ENCODE measurements at regions of chr1 and their contacts with region 1.

Region 1: GRCh38 chr1:229035054-229035747 is 235.7 kb upstream of the RAB4A start:
- DNase-seq: no peak
- H3K4me3 ChIP-seq: no peak overlapping the region
- H3K27ac ChIP-seq: no peak overlapping the region
- H3K4me1 ChIP-seq: no peaks in the 10 kb centered on the region
- H3K27me3 ChIP-seq: peaks cover 28% of the 10 kb centered on the region
- CTCF ChIP-seq: no peak

Region 2: GRCh38 chr1:228804671-228805413 is 230.4 kb before region 1 on chr1:
- CTCF ChIA-PET with region 1: no interaction called
- POLR2A ChIA-PET with region 1: no interaction called
- intact Hi-C with region 1: no loop called
- DNase-seq: no peak
- H3K4me3 ChIP-seq: no peak overlapping the region
- H3K27ac ChIP-seq: no peak overlapping the region
- H3K4me1 ChIP-seq: no peaks in the 10 kb centered on the region
- H3K27me3 ChIP-seq: no peaks in the 10 kb centered on the region
- CTCF ChIP-seq: no peak

Region 3: GRCh38 chr1:229059671-229060539 is 24.7 kb after region 1 on chr1:
- CTCF ChIA-PET with region 1: no interaction called
- POLR2A ChIA-PET with region 1: no interaction called
- intact Hi-C with region 1: loop called (anchors 2 kb)
- DNase-seq: no peak
- H3K4me3 ChIP-seq: no peak overlapping the region
- H3K27ac ChIP-seq: no peak overlapping the region
- H3K4me1 ChIP-seq: no peaks in the 10 kb centered on the region
- H3K27me3 ChIP-seq: peaks cover 3% of the 10 kb centered on the region
- CTCF ChIP-seq: no peak

Measured in A673 (cell line).